ENCODE measurements at regions of chr12 and their contacts with region 1.

Region 1: DNA sequence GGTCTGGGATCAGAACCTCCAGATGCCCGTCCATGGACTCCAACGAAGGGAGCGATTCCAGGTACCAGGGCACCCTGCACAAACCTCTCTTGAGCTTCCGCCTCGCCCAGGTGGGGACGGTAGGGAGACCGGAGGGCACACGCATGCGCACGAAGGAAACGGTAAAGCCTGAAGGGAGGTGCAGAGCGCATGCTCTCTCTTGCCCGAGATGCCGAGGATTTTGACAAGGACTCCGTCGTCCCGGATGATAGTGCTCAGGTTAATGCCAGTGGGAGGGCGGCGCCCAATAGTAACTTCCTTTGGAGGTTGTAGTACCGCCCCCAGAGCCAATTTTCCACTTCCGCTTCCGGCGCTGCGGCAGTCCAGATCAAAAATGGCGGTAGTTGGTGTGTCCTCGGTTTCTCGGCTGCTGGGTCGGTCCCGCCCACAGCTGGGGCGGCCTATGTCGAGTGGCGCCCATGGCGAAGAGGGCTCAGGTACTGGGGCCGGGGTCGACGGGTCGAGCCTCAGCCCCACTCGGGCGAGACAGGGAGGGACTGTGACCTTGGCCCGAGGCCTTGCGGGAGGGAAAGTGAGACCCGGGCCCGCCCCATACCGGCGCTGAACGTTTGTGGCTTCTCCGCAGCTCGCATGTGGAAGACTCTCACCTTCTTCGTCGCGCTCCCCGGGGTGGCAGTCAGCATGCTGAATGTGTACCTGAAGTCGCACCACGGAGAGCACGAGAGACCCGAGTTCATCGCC is at the start of gene COX6A1:
- DNase-seq: peak; percentile 77 to 99 (median 96)
- ATAC-seq: peak; percentile 96
- H3K4me3 ChIP-seq: peak within 1 kb of the TSS; percentile 63
- H3K4me3 Mint-ChIP-seq: peak within 1 kb of the TSS; percentile 87 to 100 (median 96)
- H3K27ac ChIP-seq: peak within 1 kb of the TSS; percentile 83
- H3K27ac Mint-ChIP-seq: peak within 1 kb of the TSS; percentile 88 to 97 (median 93)
- H3K4me1 ChIP-seq: peaks cover 15 to 20% of the 10 kb centered on the region in 2 donors
- H3K4me1 Mint-ChIP-seq: peaks cover 17 to 33% (median 30%) of the 10 kb centered on the region in 7 donors
- H3K27me3 ChIP-seq: no peaks in the 10 kb centered on the region
- H3K27me3 Mint-ChIP-seq: peaks cover 0 to 4% (median 2%) of the 10 kb centered on the region in 5 donors
- total RNA-seq, gene COX6A1: 118 to 270 (median 130) TPM

Region 2: DNA sequence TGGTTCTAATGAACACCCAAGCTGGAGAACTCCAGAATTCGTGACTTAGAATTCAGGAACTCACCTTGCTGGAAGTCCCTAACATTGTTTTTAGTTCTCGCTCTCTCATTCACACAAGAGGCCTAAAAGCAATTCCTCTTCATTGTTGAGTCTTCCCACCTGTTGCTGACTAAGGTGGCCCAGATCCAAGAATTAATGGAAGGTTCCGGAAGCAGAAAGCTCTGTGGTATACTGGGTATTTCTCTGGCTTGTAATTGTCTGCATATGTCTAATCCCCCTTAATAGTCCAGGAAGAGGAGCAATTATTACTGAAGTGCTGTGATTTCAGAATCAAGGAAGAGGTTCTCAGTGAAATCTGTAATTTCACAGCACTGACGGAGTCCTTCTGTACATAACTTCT is 813.0 kb before region 1 on chr12:
- CTCF ChIA-PET with region 1: no interaction called
- POLR2A ChIA-PET with region 1: no interaction called
- intact Hi-C with region 1: no loop called
- DNase-seq: no peak
- ATAC-seq: no peak
- H3K4me3 ChIP-seq: no peak overlapping the region
- H3K4me3 Mint-ChIP-seq: no peak overlapping the region
- H3K27ac ChIP-seq: no peak overlapping the region
- H3K27ac Mint-ChIP-seq: no peak overlapping the region
- H3K4me1 ChIP-seq: no peaks in the 10 kb centered on the region
- H3K4me1 Mint-ChIP-seq: no peaks in the 10 kb centered on the region
- H3K27me3 ChIP-seq: no peaks in the 10 kb centered on the region
- H3K27me3 Mint-ChIP-seq: peaks cover 20 to 49% (median 25%) of the 10 kb centered on the region in 5 donors

Region 3: DNA sequence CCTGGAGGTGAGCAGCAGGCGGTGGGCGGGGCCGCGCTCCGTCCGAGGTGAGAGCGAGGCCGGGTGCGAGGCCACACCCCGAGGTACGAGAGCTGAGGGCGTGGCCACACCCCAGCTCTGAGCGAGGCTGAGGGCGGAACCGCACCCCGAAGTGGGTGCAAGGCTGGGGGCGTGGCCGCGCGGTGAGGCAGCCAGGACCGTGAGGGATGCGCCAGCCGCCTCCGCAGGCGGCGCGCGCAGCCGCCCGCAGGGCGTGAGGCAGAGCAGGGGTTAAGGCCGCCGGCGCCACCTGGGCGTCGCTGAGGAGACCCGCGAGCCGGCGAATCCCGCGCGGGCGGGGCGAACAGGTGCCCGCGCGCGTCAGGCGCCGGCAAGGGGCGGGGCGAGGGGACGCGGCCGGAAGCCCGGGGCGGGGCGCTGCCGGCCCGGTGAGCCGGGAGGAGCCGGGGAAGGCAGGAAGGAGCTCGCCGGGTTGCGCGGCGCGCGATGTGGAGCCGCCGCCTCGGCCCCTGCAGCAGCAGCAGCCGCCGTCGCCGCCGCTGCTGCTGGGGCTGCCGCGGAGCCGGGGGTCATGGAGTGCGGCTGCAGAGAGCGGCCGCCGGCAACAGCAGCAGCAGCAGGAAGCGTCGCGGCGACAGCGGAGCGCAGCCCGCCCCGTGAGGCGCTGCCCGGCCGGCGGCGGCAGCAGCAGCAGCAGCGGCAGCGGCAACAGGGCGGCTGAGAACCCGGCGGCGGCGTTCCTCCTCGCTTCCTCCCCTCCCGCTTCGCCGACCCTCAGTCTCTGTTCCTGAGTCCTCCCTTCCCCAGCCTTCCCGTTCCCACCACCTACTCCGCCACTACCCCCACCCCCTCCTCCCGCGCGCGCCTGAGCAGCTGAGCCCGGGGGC is 448.9 kb before region 1 on chr12 and contains the start of gene BICDL1:
- CTCF ChIA-PET with region 1: no interaction called
- POLR2A ChIA-PET with region 1: no interaction called
- intact Hi-C with region 1: loop called in 1 of 2 experiments (anchors 5 kb)
- DNase-seq: peak; percentile 95 to 99 (median 98)
- ATAC-seq: peak; percentile 93
- H3K4me3 ChIP-seq: peak within 1 kb of the TSS; percentile 68
- H3K4me3 Mint-ChIP-seq: peak within 1 kb of the TSS; percentile 78 to 95 (median 87)
- H3K27ac ChIP-seq: peak within 1 kb of the TSS; percentile 90
- H3K27ac Mint-ChIP-seq: peak within 1 kb of the TSS; percentile 69 to 98 (median 93)
- H3K4me1 ChIP-seq: peaks cover 18 to 19% of the 10 kb centered on the region in 2 donors
- H3K4me1 Mint-ChIP-seq: peaks cover 18 to 46% (median 38%) of the 10 kb centered on the region in 7 donors
- H3K27me3 ChIP-seq: no peaks in the 10 kb centered on the region
- H3K27me3 Mint-ChIP-seq: peaks cover 0 to 9% (median 0%) of the 10 kb centered on the region in 5 donors
- total RNA-seq, gene BICDL1: 75.8 to 156 (median 143) TPM

Region 4: GRCh38 chr12:120412421-120412820 is 25.5 kb before region 1 on chr12:
- CTCF ChIA-PET with region 1: no interaction called
- POLR2A ChIA-PET with region 1: no interaction called
- intact Hi-C with region 1: no loop called
- DNase-seq: no peak
- ATAC-seq: no peak
- H3K4me3 ChIP-seq: no peak overlapping the region
- H3K4me3 Mint-ChIP-seq: no peak overlapping the region
- H3K27ac ChIP-seq: no peak overlapping the region
- H3K27ac Mint-ChIP-seq: no peak overlapping the region
- H3K4me1 ChIP-seq: no peaks in the 10 kb centered on the region
- H3K4me1 Mint-ChIP-seq: no peaks in the 10 kb centered on the region
- H3K27me3 ChIP-seq: no peaks in the 10 kb centered on the region
- H3K27me3 Mint-ChIP-seq: peaks cover 0 to 9% (median 5%) of the 10 kb centered on the region in 5 donors

Region 5: DNA sequence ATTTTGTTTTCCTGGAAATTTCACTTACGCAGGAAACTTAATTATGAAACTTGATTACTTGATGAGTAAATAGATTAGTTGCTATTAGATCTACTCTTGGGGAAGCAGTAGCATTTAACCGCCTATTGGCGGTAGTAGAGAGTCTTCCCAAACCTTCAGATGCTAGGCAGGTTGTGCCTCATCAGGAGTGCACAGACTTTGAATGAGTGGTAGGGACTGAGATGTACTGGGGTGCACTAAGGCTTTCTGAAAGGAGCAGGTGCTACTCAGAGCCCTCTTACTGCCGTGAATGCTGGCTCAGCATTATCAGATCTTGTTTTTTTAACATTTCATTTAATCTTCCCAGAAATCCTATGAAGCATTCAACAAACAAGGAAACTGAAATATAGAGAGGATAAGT is 16.1 kb after region 1 on chr12:
- CTCF ChIA-PET with region 1: interaction called, 4 read pairs
- POLR2A ChIA-PET with region 1: interaction called, 7 read pairs
- intact Hi-C with region 1: loop called in 1 of 2 experiments (anchors 1 kb)
- DNase-seq: peak in 4 of 9 donors; percentile 23 to 41 (median 28)
- ATAC-seq: peak; percentile 90
- H3K4me3 ChIP-seq: no peak overlapping the region
- H3K4me3 Mint-ChIP-seq: no peak overlapping the region
- H3K27ac ChIP-seq: no peak overlapping the region
- H3K27ac Mint-ChIP-seq: peak overlapping the region in 3 of 9 donors; percentile 30 to 65 (median 42)
- H3K4me1 ChIP-seq: peaks cover 0 to 3% of the 10 kb centered on the region in 2 donors
- H3K4me1 Mint-ChIP-seq: peaks cover 5 to 16% (median 8%) of the 10 kb centered on the region in 7 donors
- H3K27me3 ChIP-seq: no peaks in the 10 kb centered on the region
- H3K27me3 Mint-ChIP-seq: no peaks in the 10 kb centered on the region

Region 6: DNA sequence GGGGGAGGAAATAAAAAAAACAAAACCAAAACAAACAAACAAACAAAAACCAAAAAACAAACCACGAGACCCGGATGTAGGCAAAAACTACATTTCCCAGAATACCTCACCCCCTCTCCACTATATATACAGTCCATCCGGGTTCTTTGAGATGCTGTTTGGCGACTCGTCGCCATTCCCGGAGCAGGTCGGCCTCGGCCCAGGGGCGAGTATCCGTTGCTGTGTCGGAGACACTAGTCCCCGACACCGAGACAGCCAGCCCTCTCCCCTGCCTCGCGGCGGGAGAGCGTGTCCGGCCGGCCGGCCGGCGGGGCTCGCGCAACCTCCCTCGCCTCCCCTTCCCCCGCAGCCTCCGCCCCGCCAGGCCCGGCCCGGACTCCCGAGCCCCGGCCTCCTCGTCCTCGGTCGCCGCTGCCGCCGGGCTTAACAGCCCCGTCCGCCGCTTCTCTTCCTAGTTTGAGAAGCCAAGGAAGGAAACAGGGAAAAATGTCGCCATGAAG is 96.3 kb after region 1 on chr12 and contains the start of gene RNF10:
- CTCF ChIA-PET with region 1: no interaction called
- POLR2A ChIA-PET with region 1: no interaction called
- intact Hi-C with region 1: loop called (anchors 1 kb)
- DNase-seq: peak; percentile 61 to 88 (median 85)
- ATAC-seq: peak; percentile 84
- H3K4me3 ChIP-seq: peak within 1 kb of the TSS; percentile 92
- H3K4me3 Mint-ChIP-seq: peak within 1 kb of the TSS; percentile 87 to 98 (median 96)
- H3K27ac ChIP-seq: peak within 1 kb of the TSS; percentile 97
- H3K27ac Mint-ChIP-seq: peak within 1 kb of the TSS; percentile 90 to 95 (median 95)
- H3K4me1 ChIP-seq: peaks cover 34 to 40% of the 10 kb centered on the region in 2 donors
- H3K4me1 Mint-ChIP-seq: peaks cover 28 to 57% (median 54%) of the 10 kb centered on the region in 7 donors
- H3K27me3 ChIP-seq: no peaks in the 10 kb centered on the region
- H3K27me3 Mint-ChIP-seq: peaks cover 0 to 2% (median 0%) of the 10 kb centered on the region in 5 donors
- total RNA-seq, gene RNF10: 171 to 361 (median 205) TPM

Region 7: DNA sequence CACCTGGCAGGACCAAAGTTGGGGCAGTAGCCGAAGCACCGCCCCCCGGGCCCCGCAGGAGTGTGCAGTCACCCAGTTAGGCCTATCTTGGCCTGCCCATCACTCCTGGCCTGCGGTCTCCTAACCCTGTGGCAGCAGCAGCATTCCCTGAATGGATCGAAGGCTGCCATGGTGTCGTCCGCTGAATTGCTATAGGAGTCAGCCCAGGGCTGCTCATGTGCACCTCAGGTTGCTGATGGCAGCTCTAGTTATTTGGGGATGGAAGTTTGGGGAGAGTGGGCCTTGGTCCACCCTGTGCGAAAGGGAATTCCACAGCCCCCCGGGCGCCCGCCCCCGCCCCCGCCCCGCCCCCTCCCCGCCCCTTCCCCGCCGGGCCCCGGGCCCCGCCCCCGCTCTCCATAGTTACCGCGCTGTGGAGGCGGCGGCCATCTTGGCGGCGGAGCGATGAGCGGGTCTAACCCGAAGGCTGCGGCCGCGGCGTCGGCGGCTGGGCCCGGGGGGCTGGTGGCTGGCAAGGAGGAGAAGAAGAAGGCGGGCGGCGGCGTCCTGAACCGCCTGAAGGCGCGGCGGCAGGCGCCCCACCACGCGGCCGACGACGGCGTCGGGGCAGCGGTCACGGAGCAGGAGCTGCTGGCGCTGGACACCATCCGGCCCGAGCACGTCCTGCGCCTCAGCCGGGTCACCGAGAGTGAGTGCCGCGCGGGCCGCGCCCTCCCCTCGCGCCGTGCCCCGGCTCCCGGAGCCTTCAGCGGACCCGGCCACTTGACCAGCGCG is 272.3 kb after region 1 on chr12 and contains the start of gene UNC119B:
- CTCF ChIA-PET with region 1: interaction called, 4 read pairs
- POLR2A ChIA-PET with region 1: no interaction called
- intact Hi-C with region 1: loop called in 1 of 2 experiments (anchors 1 kb)
- DNase-seq: peak; percentile 53 to 82 (median 69)
- ATAC-seq: peak; percentile 92
- H3K4me3 ChIP-seq: peak within 1 kb of the TSS; percentile 69
- H3K4me3 Mint-ChIP-seq: peak within 1 kb of the TSS; percentile 87 to 98 (median 95)
- H3K27ac ChIP-seq: peak within 1 kb of the TSS; percentile 83
- H3K27ac Mint-ChIP-seq: peak within 1 kb of the TSS; percentile 87 to 96 (median 92)
- H3K4me1 ChIP-seq: peaks cover 5 to 7% of the 10 kb centered on the region in 2 donors
- H3K4me1 Mint-ChIP-seq: peaks cover 20 to 40% (median 37%) of the 10 kb centered on the region in 7 donors
- H3K27me3 ChIP-seq: no peaks in the 10 kb centered on the region
- H3K27me3 Mint-ChIP-seq: no peaks in the 10 kb centered on the region
- total RNA-seq, gene UNC119B: 10.9 to 26.7 (median 18.8) TPM

Region 8: GRCh38 chr12:121399391-121400331 is 961.7 kb after region 1 on chr12 and contains the start of gene RNF34:
- CTCF ChIA-PET with region 1: no interaction called
- POLR2A ChIA-PET with region 1: no interaction called
- intact Hi-C with region 1: loop called in 1 of 2 experiments (anchors 5 kb)
- DNase-seq: peak; percentile 88 to 98 (median 97)
- ATAC-seq: peak; percentile 96
- H3K4me3 ChIP-seq: peak within 1 kb of the TSS; percentile 93
- H3K4me3 Mint-ChIP-seq: peak within 1 kb of the TSS; percentile 89 to 99 (median 94)
- H3K27ac ChIP-seq: peak within 1 kb of the TSS; percentile 91
- H3K27ac Mint-ChIP-seq: peak within 1 kb of the TSS; percentile 91 to 97 (median 94)
- H3K4me1 ChIP-seq: peaks cover 20 to 26% of the 10 kb centered on the region in 2 donors
- H3K4me1 Mint-ChIP-seq: peaks cover 29 to 52% (median 39%) of the 10 kb centered on the region in 7 donors
- H3K27me3 ChIP-seq: no peaks in the 10 kb centered on the region
- H3K27me3 Mint-ChIP-seq: no peaks in the 10 kb centered on the region
- total RNA-seq, gene RNF34: 61.1 to 98.4 (median 81.7) TPM

Measured in naive thymus-derived CD4-positive, alpha-beta T cell (primary cell).